PC-3 (cell line): ENCODE measurements at regions of chr16 and their contacts with region 1.

Region 1: GRCh38 chr16:24036614-24037013 is 200.8 kb downstream of the PRKCB start:
- DNase-seq: peak; percentile 55
- ATAC-seq: peak; percentile 62; the same call in 1 of the 2 replicates
- H3K4me3 ChIP-seq: no peak overlapping the region
- H3K27ac ChIP-seq: no peak overlapping the region
- H3K4me1 ChIP-seq: no peaks in the 10 kb centered on the region
- H3K27me3 ChIP-seq: no peaks in the 10 kb centered on the region
- CTCF ChIP-seq: peak; percentile 64

Region 2: GRCh38 chr16:23678430-23679273 is 358.0 kb before region 1 on chr16 and contains the start of gene PLK1:
- CTCF ChIA-PET with region 1: no interaction called
- POLR2A ChIA-PET with region 1: no interaction called
- intact Hi-C with region 1: loop called (anchors 5 kb)
- DNase-seq: peak; percentile 89
- ATAC-seq: peak; percentile 89
- H3K4me3 ChIP-seq: peak within 1 kb of the TSS; percentile 100
- H3K27ac ChIP-seq: peak within 1 kb of the TSS; percentile 70
- H3K4me1 ChIP-seq: peaks cover 23% of the 10 kb centered on the region
- H3K27me3 ChIP-seq: no peaks in the 10 kb centered on the region
- CTCF ChIP-seq: peak; percentile 42; the same call in 1 of the 2 replicates
- total RNA-seq, gene PLK1: 58.6 and 67.8 TPM in 2 replicates

Region 3: GRCh38 chr16:23803591-23804123 is 233.0 kb before region 1 on chr16:
- CTCF ChIA-PET with region 1: no interaction called
- POLR2A ChIA-PET with region 1: no interaction called
- intact Hi-C with region 1: loop called (anchors 1 kb)
- DNase-seq: peak; percentile 44
- ATAC-seq: peak; percentile 70
- H3K4me3 ChIP-seq: no peak overlapping the region
- H3K27ac ChIP-seq: no peak overlapping the region
- H3K4me1 ChIP-seq: no peaks in the 10 kb centered on the region
- H3K27me3 ChIP-seq: peaks cover 6% of the 10 kb centered on the region; the same call in 1 of the 2 replicates
- CTCF ChIP-seq: peak; percentile 59